ENCODE measurements at regions of chr15 and their contacts with region 1.

Region 1: DNA sequence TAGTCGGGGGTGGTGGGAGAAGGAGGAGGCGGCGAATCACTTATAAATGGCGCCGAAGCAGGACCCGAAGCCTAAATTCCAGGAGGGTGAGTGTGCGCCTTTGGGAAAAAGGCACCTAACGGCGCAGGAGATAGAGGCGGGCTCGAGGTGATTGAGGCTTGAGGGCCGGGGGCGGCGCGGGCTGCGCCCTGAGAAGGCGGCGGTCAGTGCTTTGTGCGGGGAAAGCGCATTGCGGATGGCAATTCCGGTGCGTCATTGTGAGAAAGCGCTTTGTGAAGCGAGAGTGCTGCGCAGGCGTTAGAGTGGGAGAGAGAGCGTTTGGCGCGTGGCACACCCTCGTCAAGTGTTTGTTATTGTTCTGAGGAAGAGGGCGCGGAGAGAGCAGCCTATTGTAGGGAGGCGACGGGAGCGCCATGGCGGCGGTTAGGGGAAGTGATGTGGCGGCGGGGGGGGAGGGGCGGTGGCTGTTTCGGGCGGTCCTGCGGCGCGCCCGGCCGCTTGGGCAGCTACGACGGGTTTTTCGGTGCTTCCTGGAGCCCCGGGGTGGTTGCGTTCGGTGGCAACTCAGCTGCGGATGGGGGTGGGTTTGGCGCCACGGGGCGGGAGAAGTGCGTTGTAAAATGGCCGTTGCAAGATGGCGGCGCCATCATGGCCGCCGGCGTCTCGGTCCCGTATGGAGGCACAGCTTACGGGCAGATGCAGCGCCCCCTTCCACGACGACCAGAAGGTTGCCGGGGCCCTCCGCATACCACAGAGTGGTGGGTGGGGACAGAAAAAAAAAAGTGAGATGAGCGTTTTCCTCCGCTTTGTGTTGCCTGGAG is 492 bp downstream of the MORF4L1 start:
- DNase-seq: peak; percentile 91
- H3K4me3 ChIP-seq: peak overlapping the region; percentile 83 to 97 (median 91)
- H3K27ac ChIP-seq: peak overlapping the region; percentile 98
- H3K4me1 ChIP-seq: peaks cover 22% of the 10 kb centered on the region
- H3K27me3 ChIP-seq: no peaks in the 10 kb centered on the region
- CTCF ChIP-seq: peak; percentile 43 to 71
- POLR2A ChIP-seq: peak; percentile 30

Region 2: GRCh38 chr15:78761891-78762385 is 111.2 kb before region 1 on chr15:
- CTCF ChIA-PET with region 1: no interaction called
- POLR2A ChIA-PET with region 1: no interaction called
- dilution Hi-C with region 1: no loop called
- intact Hi-C with region 1: loop called (anchors 2 kb)
- DNase-seq: no peak
- H3K4me3 ChIP-seq: no peak overlapping the region
- H3K27ac ChIP-seq: peak overlapping the region; percentile 85
- H3K4me1 ChIP-seq: peaks cover 27% of the 10 kb centered on the region
- H3K27me3 ChIP-seq: no peaks in the 10 kb centered on the region
- CTCF ChIP-seq: no peak
- POLR2A ChIP-seq: no peak

Region 3: GRCh38 chr15:78859971-78860732 is 13.0 kb before region 1 on chr15:
- CTCF ChIA-PET with region 1: interaction called, 24 read pairs
- POLR2A ChIA-PET with region 1: interaction called, 14 read pairs
- dilution Hi-C with region 1: no loop called
- intact Hi-C with region 1: loop called (anchors 1 kb)
- DNase-seq: peak; percentile 76
- H3K4me3 ChIP-seq: peak overlapping the region; percentile 47 to 83 (median 74)
- H3K27ac ChIP-seq: peak overlapping the region; percentile 61
- H3K4me1 ChIP-seq: peaks cover 5% of the 10 kb centered on the region
- H3K27me3 ChIP-seq: peaks cover 0 to 2% of the 10 kb centered on the region in 2 experiments
- CTCF ChIP-seq: peak; percentile 42 to 44
- POLR2A ChIP-seq: no peak